MCF 10A (cell line): ENCODE measurements at regions of chr1 and their contacts with region 1.

Region 1: DNA sequence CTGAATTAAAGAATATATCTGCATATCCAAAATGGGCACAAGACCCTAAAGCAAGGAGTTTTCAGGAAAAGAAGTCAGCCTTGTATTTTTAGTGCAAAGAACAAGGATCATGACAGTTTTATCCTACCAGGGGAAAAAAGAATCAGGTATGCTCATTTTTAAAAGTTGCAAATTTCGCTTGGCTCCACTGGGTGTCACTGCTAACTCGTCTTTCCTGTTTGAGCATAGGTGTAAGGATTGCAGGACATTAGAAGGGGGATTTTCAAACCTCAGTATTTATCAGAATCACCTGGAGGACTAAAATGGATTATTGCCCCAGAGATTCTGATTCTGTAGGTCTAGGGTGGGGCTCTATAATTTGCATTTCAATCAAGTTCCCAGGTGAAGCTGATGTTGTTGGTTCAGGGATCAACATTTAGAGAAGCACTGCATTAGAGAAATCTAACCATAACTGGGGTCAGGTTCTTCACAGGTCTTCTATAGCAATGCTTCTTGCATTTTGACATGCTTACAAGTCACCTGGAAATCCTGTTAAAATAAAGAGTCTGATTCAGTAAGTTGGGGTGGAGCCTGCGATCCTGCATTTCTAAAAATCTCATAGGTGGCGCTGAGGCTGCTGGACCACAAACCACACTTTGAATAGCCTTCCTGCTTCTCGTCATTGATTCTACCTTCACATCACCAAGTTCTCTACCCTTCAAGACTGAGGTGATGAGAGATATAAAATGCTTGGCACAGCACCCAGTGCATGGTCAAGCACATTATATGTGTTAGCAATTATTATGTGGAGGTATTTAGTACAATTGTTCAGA is 39.6 kb downstream of the NUF2 start:
- DNase-seq: peak; percentile 58
- H3K4me3 Mint-ChIP-seq: no peak overlapping the region
- H3K27ac Mint-ChIP-seq: no peak overlapping the region
- H3K4me1 Mint-ChIP-seq: no peaks in the 10 kb centered on the region
- H3K27me3 Mint-ChIP-seq: no peaks in the 10 kb centered on the region
- CTCF ChIP-seq: peak; percentile 65

Region 2: GRCh38 chr1:163381487-163382184 is 20.3 kb after region 1 on chr1:
- CTCF ChIA-PET with region 1: interaction called, 58 read pairs
- POLR2A ChIA-PET with region 1: interaction called, 4 read pairs
- intact Hi-C with region 1: no loop called
- DNase-seq: no peak
- H3K4me3 Mint-ChIP-seq: no peak overlapping the region
- H3K27ac Mint-ChIP-seq: no peak overlapping the region
- H3K4me1 Mint-ChIP-seq: no peaks in the 10 kb centered on the region
- H3K27me3 Mint-ChIP-seq: peaks cover 35% of the 10 kb centered on the region
- CTCF ChIP-seq: no peak

Region 3: GRCh38 chr1:164017239-164017638 is 655.9 kb after region 1 on chr1:
- CTCF ChIA-PET with region 1: no interaction called
- POLR2A ChIA-PET with region 1: no interaction called
- intact Hi-C with region 1: no loop called
- DNase-seq: peak; percentile 6
- H3K4me3 Mint-ChIP-seq: no peak overlapping the region
- H3K27ac Mint-ChIP-seq: no peak overlapping the region
- H3K4me1 Mint-ChIP-seq: no peaks in the 10 kb centered on the region
- H3K27me3 Mint-ChIP-seq: no peaks in the 10 kb centered on the region
- CTCF ChIP-seq: no peak